ENCODE measurements at regions of chr2 and their contacts with region 1.

Region 1: GRCh38 chr2:120669121-120669952 is 66.3 kb upstream of the GLI2 start:
- DNase-seq: peak in 1 of 2 experiments; percentile 78
- H3K4me3 ChIP-seq: no peak overlapping the region
- H3K27ac ChIP-seq: no peak overlapping the region
- H3K4me1 ChIP-seq: peaks cover 0 to 6% (median 0%) of the 10 kb centered on the region in 4 experiments; a peak in 2 of 7 replicates
- H3K27me3 ChIP-seq: peaks cover 0 to 22% (median 19%) of the 10 kb centered on the region in 4 experiments; a peak in 6 of 7 replicates
- CTCF ChIP-seq: peak; percentile 70 to 89 (median 86); a peak in 3 of 4 replicates
- EP300 ChIP-seq: no peak
- POLR2A ChIP-seq: no peak
- RAD21 ChIP-seq: peak; percentile 55 to 70

Region 2: GRCh38 chr2:120605231-120605935 is 64.0 kb before region 1 on chr2:
- CTCF ChIA-PET with region 1: interaction called, 23 read pairs
- POLR2A ChIA-PET with region 1: no interaction called
- DNase-seq: no peak
- H3K4me3 ChIP-seq: no peak overlapping the region
- H3K27ac ChIP-seq: no peak overlapping the region
- H3K4me1 ChIP-seq: peaks cover 0 to 4% (median 3%) of the 10 kb centered on the region in 4 experiments; a peak in 4 of 7 replicates
- H3K27me3 ChIP-seq: peaks cover 0 to 2% (median 0%) of the 10 kb centered on the region in 4 experiments; a peak in 2 of 7 replicates
- CTCF ChIP-seq: no peak
- EP300 ChIP-seq: no peak
- POLR2A ChIP-seq: no peak
- RAD21 ChIP-seq: no peak

Region 3: DNA sequence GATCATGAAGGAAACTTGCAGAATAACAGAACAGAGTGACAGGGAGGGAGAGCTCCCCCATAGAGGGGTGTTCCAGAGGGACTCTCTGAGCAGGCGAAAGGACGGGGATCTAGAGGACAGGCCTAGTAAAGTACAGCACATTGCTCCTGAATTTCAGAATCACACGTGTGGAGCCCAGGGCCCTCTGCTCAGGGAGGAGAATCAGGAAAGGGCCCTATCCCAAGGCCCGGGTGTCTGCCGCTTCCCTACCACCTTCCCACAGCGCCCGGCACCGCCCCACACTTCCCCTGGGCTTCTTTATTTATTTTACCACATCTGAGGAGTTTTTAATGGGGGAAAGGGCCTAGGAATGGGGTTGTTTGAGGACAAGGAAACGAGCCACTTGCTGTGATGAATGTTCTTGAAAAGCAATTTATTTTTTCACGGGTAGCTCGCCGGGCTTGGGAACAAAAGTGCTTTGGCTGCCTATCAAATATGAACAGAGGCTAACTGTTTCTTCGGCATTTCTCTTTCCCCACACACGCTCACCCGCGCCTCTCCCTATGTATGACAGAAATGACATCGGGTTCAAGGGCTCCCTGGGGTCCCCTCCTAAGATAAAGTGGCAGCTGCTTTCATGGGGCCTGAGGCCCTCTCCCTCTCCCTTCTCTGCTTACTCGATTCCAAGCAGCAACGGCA is 12.9 kb before region 1 on chr2:
- CTCF ChIA-PET with region 1: interaction called, 58 read pairs
- POLR2A ChIA-PET with region 1: no interaction called
- DNase-seq: no peak
- H3K4me3 ChIP-seq: no peak overlapping the region
- H3K27ac ChIP-seq: no peak overlapping the region
- H3K4me1 ChIP-seq: peaks cover 1 to 11% (median 7%) of the 10 kb centered on the region in 4 experiments; a peak in 6 of 7 replicates
- H3K27me3 ChIP-seq: peaks cover 10 to 39% (median 30%) of the 10 kb centered on the region in 4 experiments
- CTCF ChIP-seq: no peak
- EP300 ChIP-seq: no peak
- POLR2A ChIP-seq: no peak
- RAD21 ChIP-seq: no peak

Region 4: GRCh38 chr2:120686511-120687168 is 17.3 kb after region 1 on chr2:
- CTCF ChIA-PET with region 1: interaction called, 34 read pairs
- POLR2A ChIA-PET with region 1: no interaction called
- DNase-seq: no peak
- H3K4me3 ChIP-seq: no peak overlapping the region
- H3K27ac ChIP-seq: no peak overlapping the region
- H3K4me1 ChIP-seq: no peaks in the 10 kb centered on the region
- H3K27me3 ChIP-seq: peaks cover 0 to 6% (median 3%) of the 10 kb centered on the region in 4 experiments; a peak in 4 of 7 replicates
- CTCF ChIP-seq: peak; percentile 62 to 77 (median 70)
- EP300 ChIP-seq: no peak
- POLR2A ChIP-seq: no peak
- RAD21 ChIP-seq: peak; percentile 12 to 18; a peak in 3 of 4 replicates

Region 5: DNA sequence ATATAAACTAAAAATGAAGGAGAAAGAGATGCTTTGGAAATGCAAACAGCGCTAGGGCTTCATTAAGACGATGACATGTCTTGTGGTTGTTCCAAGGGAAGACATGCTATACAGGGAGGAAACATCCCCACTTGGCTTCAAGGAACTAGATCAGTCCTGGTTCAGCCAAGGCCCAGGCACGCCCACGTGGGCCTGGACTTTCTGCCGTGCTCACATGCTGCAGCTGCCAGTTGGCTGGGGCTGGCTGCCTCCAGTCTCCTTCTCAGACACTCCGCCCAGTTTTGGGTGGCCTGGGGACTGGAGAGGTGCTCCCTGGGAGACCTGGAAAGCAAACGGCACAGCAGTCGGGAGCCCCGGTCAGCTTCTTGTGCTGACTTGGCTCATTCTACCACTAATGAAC is 175.9 kb after region 1 on chr2:
- CTCF ChIA-PET with region 1: no interaction called
- POLR2A ChIA-PET with region 1: no interaction called
- DNase-seq: no peak
- H3K4me3 ChIP-seq: no peak overlapping the region
- H3K27ac ChIP-seq: no peak overlapping the region
- H3K4me1 ChIP-seq: peaks cover 0 to 2% (median 0%) of the 10 kb centered on the region in 4 experiments; a peak in 1 of 7 replicates
- H3K27me3 ChIP-seq: no peaks in the 10 kb centered on the region
- CTCF ChIP-seq: no peak
- EP300 ChIP-seq: no peak
- POLR2A ChIP-seq: no peak
- RAD21 ChIP-seq: no peak